ENCODE measurements at regions of chr6 and their contacts with region 1.

Region 1: GRCh38 chr6:113858480-113859348 is 1.6 kb downstream of the MARCKS start:
- DNase-seq: peak; percentile 86
- H3K4me3 Mint-ChIP-seq: no peak overlapping the region
- H3K27ac Mint-ChIP-seq: no peak overlapping the region
- H3K4me1 Mint-ChIP-seq: peaks cover 16% of the 10 kb centered on the region
- H3K27me3 Mint-ChIP-seq: peaks cover 30% of the 10 kb centered on the region

Region 2: GRCh38 chr6:112289038-112289566 is 1569.6 kb before region 1 on chr6:
- CTCF ChIA-PET with region 1: no interaction called
- POLR2A ChIA-PET with region 1: no interaction called
- intact Hi-C with region 1: loop called (anchors 5 kb)
- DNase-seq: no peak
- H3K4me3 Mint-ChIP-seq: no peak overlapping the region
- H3K27ac Mint-ChIP-seq: no peak overlapping the region
- H3K4me1 Mint-ChIP-seq: peaks cover 20% of the 10 kb centered on the region
- H3K27me3 Mint-ChIP-seq: peaks cover 26% of the 10 kb centered on the region

Region 3: GRCh38 chr6:113306552-113307145 is 552.1 kb before region 1 on chr6:
- CTCF ChIA-PET with region 1: interaction called, 38 read pairs
- POLR2A ChIA-PET with region 1: no interaction called
- intact Hi-C with region 1: no loop called
- DNase-seq: peak; percentile 60
- H3K4me3 Mint-ChIP-seq: no peak overlapping the region
- H3K27ac Mint-ChIP-seq: no peak overlapping the region
- H3K4me1 Mint-ChIP-seq: no peaks in the 10 kb centered on the region
- H3K27me3 Mint-ChIP-seq: no peaks in the 10 kb centered on the region

Region 4: DNA sequence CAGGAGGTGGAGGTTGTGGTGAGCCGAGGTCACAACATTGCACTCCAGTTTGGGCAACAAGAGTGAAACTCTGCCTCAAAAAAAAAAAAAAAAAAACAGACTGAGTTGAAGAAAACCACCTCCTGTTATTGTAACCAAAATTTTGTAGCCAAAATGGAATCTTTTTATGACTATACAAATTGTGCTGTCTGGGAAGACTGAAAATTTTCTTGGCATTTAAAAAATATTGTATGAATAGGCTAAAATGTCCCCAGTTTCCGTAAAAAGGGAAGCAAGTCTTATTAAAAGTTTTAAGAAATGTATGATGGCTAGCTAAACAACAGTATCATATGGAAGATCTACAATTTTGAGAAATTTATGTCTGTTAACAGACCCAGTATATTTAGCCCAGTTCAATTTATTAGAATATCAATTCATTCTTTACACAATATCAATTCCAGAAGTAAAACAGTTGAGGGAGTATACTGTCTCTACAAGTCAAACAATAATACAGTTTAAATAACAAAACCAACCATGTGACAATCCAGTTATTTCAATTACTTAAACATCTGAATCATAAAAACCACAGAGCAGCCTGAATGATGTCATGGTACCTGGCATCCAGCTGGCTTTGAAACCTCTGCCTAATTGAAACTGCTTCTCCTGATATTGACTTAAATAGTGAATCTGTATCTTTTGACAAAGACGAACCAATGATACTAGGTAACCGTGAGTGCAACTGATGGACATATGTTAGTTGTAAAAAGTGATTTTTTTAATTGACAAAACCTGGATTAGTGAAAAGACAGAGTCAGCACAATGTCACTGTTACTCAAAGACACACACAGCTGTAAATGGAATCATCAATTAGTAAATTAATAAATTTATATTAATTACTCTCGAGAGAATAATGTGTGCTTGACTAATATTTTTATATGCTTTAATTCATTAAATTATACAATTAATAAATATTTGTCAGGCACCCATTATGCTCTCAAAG is 168.1 kb before region 1 on chr6:
- CTCF ChIA-PET with region 1: no interaction called
- POLR2A ChIA-PET with region 1: no interaction called
- intact Hi-C with region 1: loop called (anchors 5 kb)
- DNase-seq: peak; percentile 16
- H3K4me3 Mint-ChIP-seq: no peak overlapping the region
- H3K27ac Mint-ChIP-seq: no peak overlapping the region
- H3K4me1 Mint-ChIP-seq: no peaks in the 10 kb centered on the region
- H3K27me3 Mint-ChIP-seq: no peaks in the 10 kb centered on the region